ENCODE measurements at regions of chr5 and their contacts with region 1.

Region 1: GRCh38 chr5:139517683-139518564 is 35.4 kb upstream of the STING1 start:
- DNase-seq: peak; percentile 78 to 97 (median 89)
- ATAC-seq: peak; percentile 97
- H3K4me3 ChIP-seq: peak overlapping the region; percentile 79
- H3K4me3 Mint-ChIP-seq: peak overlapping the region; percentile 88 to 93 (median 90)
- H3K27ac ChIP-seq: peak overlapping the region; percentile 90
- H3K27ac Mint-ChIP-seq: peak overlapping the region; percentile 93 to 99 (median 96)
- H3K4me1 ChIP-seq: peaks cover 0 to 3% of the 10 kb centered on the region in 2 donors
- H3K4me1 Mint-ChIP-seq: peaks cover 14 to 34% (median 26%) of the 10 kb centered on the region in 7 donors
- H3K27me3 ChIP-seq: no peaks in the 10 kb centered on the region
- H3K27me3 Mint-ChIP-seq: no peaks in the 10 kb centered on the region

Region 2: DNA sequence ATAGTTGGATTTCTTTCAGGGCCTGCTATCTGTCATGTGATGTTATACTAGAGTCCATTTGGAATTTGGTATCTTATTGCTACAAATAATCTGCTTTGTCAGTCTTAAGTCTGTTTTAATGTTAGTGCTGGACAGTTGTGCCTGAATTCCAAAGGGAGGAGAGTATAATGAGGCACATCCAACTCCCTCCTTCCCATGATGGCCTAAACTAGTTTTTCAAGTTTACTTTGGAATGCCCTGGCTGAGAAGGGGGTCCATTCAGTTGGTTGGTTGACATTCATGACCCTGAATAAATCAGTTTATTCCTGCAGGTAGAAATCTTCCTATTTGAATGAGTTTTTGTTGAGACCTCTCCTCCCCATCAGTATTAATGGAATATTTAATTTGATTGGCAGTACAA is 633.4 kb before region 1 on chr5:
- CTCF ChIA-PET with region 1: no interaction called
- POLR2A ChIA-PET with region 1: no interaction called
- intact Hi-C with region 1: no loop called
- DNase-seq: no peak
- ATAC-seq: no peak
- H3K4me3 ChIP-seq: no peak overlapping the region
- H3K4me3 Mint-ChIP-seq: no peak overlapping the region
- H3K27ac ChIP-seq: no peak overlapping the region
- H3K27ac Mint-ChIP-seq: no peak overlapping the region
- H3K4me1 ChIP-seq: no peaks in the 10 kb centered on the region
- H3K4me1 Mint-ChIP-seq: no peaks in the 10 kb centered on the region
- H3K27me3 ChIP-seq: peaks cover 0 to 2% of the 10 kb centered on the region in 2 donors
- H3K27me3 Mint-ChIP-seq: peaks cover 8 to 15% (median 12%) of the 10 kb centered on the region in 5 donors

Region 3: GRCh38 chr5:139177809-139178588 is 339.9 kb before region 1 on chr5:
- CTCF ChIA-PET with region 1: no interaction called
- POLR2A ChIA-PET with region 1: no interaction called
- intact Hi-C with region 1: no loop called
- DNase-seq: no peak
- ATAC-seq: peak; percentile 47
- H3K4me3 ChIP-seq: no peak overlapping the region
- H3K4me3 Mint-ChIP-seq: no peak overlapping the region
- H3K27ac ChIP-seq: no peak overlapping the region
- H3K27ac Mint-ChIP-seq: no peak overlapping the region
- H3K4me1 ChIP-seq: no peaks in the 10 kb centered on the region
- H3K4me1 Mint-ChIP-seq: peaks cover 4 to 32% (median 18%) of the 10 kb centered on the region in 7 donors
- H3K27me3 ChIP-seq: no peaks in the 10 kb centered on the region
- H3K27me3 Mint-ChIP-seq: no peaks in the 10 kb centered on the region

Region 4: GRCh38 chr5:139197710-139198669 is 319.9 kb before region 1 on chr5 and contains the start of gene SIL1:
- CTCF ChIA-PET with region 1: no interaction called
- POLR2A ChIA-PET with region 1: interaction called, 3 read pairs
- intact Hi-C with region 1: loop called in 1 of 2 experiments (anchors 10 kb)
- DNase-seq: peak; percentile 88 to 94 (median 91)
- ATAC-seq: peak; percentile 99
- H3K4me3 ChIP-seq: peak within 1 kb of the TSS; percentile 97
- H3K4me3 Mint-ChIP-seq: peak within 1 kb of the TSS; percentile 83 to 96 (median 90)
- H3K27ac ChIP-seq: peak within 1 kb of the TSS; percentile 89
- H3K27ac Mint-ChIP-seq: peak within 1 kb of the TSS; percentile 86 to 96 (median 91)
- H3K4me1 ChIP-seq: peaks cover 8% of the 10 kb centered on the region in 2 donors
- H3K4me1 Mint-ChIP-seq: peaks cover 17 to 38% (median 26%) of the 10 kb centered on the region in 7 donors
- H3K27me3 ChIP-seq: no peaks in the 10 kb centered on the region
- H3K27me3 Mint-ChIP-seq: no peaks in the 10 kb centered on the region
- total RNA-seq, gene SIL1: 11.9 to 27.1 (median 22.8) TPM

Region 5: GRCh38 chr5:139341650-139342422 is 176.1 kb before region 1 on chr5 and contains the start of gene PAIP2:
- CTCF ChIA-PET with region 1: no interaction called
- POLR2A ChIA-PET with region 1: interaction called, 7 read pairs
- intact Hi-C with region 1: loop called in 1 of 2 experiments (anchors 2 kb)
- DNase-seq: peak; percentile 94 to 98 (median 97)
- ATAC-seq: peak; percentile 95
- H3K4me3 ChIP-seq: peak within 1 kb of the TSS; percentile 96
- H3K4me3 Mint-ChIP-seq: peak within 1 kb of the TSS; percentile 95 to 100 (median 98)
- H3K27ac ChIP-seq: peak within 1 kb of the TSS; percentile 98
- H3K27ac Mint-ChIP-seq: peak within 1 kb of the TSS; percentile 96 to 100 (median 99)
- H3K4me1 ChIP-seq: peaks cover 28 to 30% of the 10 kb centered on the region in 2 donors
- H3K4me1 Mint-ChIP-seq: peaks cover 34 to 65% (median 55%) of the 10 kb centered on the region in 7 donors
- H3K27me3 ChIP-seq: no peaks in the 10 kb centered on the region
- H3K27me3 Mint-ChIP-seq: peaks cover 0 to 5% (median 0%) of the 10 kb centered on the region in 5 donors
- total RNA-seq, gene PAIP2: 88.8 to 121 (median 106) TPM

Region 6: GRCh38 chr5:139422307-139422893 is 95.5 kb before region 1 on chr5:
- CTCF ChIA-PET with region 1: interaction called, 310 read pairs
- POLR2A ChIA-PET with region 1: interaction called, 102 read pairs
- intact Hi-C with region 1: loop called (anchors 1 kb)
- DNase-seq: peak in 7 of 9 donors; percentile 65 to 86 (median 75)
- ATAC-seq: peak; percentile 99
- H3K4me3 ChIP-seq: no peak overlapping the region
- H3K4me3 Mint-ChIP-seq: peak overlapping the region in 2 of 10 donors; percentile 19 to 47
- H3K27ac ChIP-seq: no peak overlapping the region
- H3K27ac Mint-ChIP-seq: peak overlapping the region in 6 of 9 donors; percentile 16 to 87 (median 74)
- H3K4me1 ChIP-seq: peaks cover 3 to 4% of the 10 kb centered on the region in 2 donors
- H3K4me1 Mint-ChIP-seq: peaks cover 4 to 40% (median 6%) of the 10 kb centered on the region in 7 donors
- H3K27me3 ChIP-seq: no peaks in the 10 kb centered on the region
- H3K27me3 Mint-ChIP-seq: no peaks in the 10 kb centered on the region

Region 7: GRCh38 chr5:139474890-139475791 is 42.8 kb before region 1 on chr5:
- CTCF ChIA-PET with region 1: interaction called, 26 read pairs
- POLR2A ChIA-PET with region 1: interaction called, 70 read pairs
- intact Hi-C with region 1: loop called (anchors 5 kb)
- DNase-seq: peak in 4 of 9 donors; percentile 40 to 48 (median 44)
- ATAC-seq: peak; percentile 74
- H3K4me3 ChIP-seq: peak overlapping the region; percentile 42
- H3K4me3 Mint-ChIP-seq: peak overlapping the region; percentile 49 to 97 (median 68)
- H3K27ac ChIP-seq: peak overlapping the region; percentile 64
- H3K27ac Mint-ChIP-seq: peak overlapping the region; percentile 30 to 98 (median 88)
- H3K4me1 ChIP-seq: peaks cover 37 to 76% of the 10 kb centered on the region in 2 donors
- H3K4me1 Mint-ChIP-seq: peaks cover 60 to 92% (median 80%) of the 10 kb centered on the region in 7 donors
- H3K27me3 ChIP-seq: no peaks in the 10 kb centered on the region
- H3K27me3 Mint-ChIP-seq: no peaks in the 10 kb centered on the region

Region 8: DNA sequence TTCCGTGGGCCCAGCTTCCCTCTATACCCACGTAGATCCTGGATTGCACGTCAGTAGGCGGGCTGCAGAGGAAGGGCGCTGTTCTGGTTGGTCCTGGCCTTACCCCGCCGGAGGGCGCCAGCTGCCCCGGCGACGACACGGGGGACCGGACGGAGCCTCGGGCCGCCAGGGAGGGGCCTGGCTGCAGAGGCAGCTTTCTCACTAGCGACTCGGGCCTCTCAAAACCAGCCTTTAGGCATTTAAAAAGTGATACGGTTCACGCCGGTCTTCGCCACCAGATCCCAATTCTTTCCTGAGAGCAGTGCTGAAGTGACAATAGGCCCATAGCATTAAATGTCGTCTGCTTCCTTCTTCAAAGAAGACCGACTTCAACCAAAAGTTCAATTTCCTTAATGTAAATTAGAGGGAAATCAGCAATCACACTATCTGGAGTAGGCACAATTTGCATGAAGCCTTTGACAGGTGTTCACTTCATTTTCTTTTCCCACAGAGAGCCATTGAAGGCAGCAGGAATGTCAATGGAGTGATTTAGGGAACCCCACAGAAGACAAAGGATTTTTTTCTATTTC is 25.6 kb after region 1 on chr5:
- CTCF ChIA-PET with region 1: interaction called, 4 read pairs
- POLR2A ChIA-PET with region 1: no interaction called
- intact Hi-C with region 1: loop called in 1 of 2 experiments (anchors 2 kb)
- DNase-seq: peak; percentile 23 to 51 (median 47)
- ATAC-seq: peak; percentile 98
- H3K4me3 ChIP-seq: peak overlapping the region; percentile 32
- H3K4me3 Mint-ChIP-seq: peak overlapping the region; percentile 27 to 69 (median 62)
- H3K27ac ChIP-seq: peak overlapping the region; percentile 50
- H3K27ac Mint-ChIP-seq: peak overlapping the region in 7 of 9 donors; percentile 31 to 76 (median 54)
- H3K4me1 ChIP-seq: no peaks in the 10 kb centered on the region
- H3K4me1 Mint-ChIP-seq: peaks cover 1 to 13% (median 8%) of the 10 kb centered on the region in 7 donors
- H3K27me3 ChIP-seq: no peaks in the 10 kb centered on the region
- H3K27me3 Mint-ChIP-seq: no peaks in the 10 kb centered on the region

Region 9: DNA sequence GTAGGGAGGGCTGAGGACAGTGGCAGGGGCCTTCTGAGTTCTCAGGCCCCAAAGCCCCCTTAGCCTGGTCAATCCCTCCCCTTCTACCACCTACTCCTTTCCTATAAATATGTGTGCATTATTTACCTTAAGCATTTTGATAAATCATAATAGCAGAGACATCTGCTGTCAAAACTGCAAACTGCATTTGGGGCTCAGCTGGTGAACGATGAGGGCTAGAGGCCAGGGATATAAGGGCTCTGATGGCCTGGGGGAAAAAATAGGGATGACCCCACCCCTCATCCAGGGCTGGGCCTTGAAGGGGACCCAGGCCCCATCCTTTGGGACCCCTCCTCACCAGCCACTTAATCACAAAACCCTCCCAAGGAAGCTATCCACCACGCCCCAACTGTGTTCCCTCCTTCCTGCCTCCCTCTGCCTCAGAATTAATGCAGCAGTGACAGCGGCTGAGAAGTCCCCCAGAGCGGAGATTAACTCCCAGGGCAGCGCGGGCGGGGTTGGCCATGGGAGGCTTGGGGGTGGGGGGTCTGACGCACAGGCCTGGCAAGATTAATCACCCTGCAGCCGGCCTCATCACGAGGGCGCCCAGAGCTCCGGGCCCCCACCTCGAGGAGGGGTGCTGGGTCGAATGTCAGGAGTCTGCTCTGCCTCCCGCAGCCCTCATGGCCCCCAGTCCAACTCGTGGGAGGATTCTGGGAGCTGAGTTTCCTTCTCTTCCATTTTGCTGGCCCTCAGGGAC is 172.3 kb after region 1 on chr5:
- CTCF ChIA-PET with region 1: interaction called, 7 read pairs
- POLR2A ChIA-PET with region 1: interaction called, 3 read pairs
- intact Hi-C with region 1: loop called (anchors 1 kb)
- DNase-seq: peak in 2 of 9 donors; percentile 26 to 27
- ATAC-seq: peak; percentile 59
- H3K4me3 ChIP-seq: no peak overlapping the region
- H3K4me3 Mint-ChIP-seq: no peak overlapping the region
- H3K27ac ChIP-seq: no peak overlapping the region
- H3K27ac Mint-ChIP-seq: no peak overlapping the region
- H3K4me1 ChIP-seq: no peaks in the 10 kb centered on the region
- H3K4me1 Mint-ChIP-seq: peaks cover 3 to 17% (median 6%) of the 10 kb centered on the region in 7 donors
- H3K27me3 ChIP-seq: no peaks in the 10 kb centered on the region
- H3K27me3 Mint-ChIP-seq: peaks cover 0 to 17% (median 0%) of the 10 kb centered on the region in 5 donors